CD8-positive, alpha-beta T cell (primary cell): ENCODE measurements at regions of chr5 and their contacts with region 1.

Region 1: GRCh38 chr5:97183100-97183929 is at the start of gene RIOK2:
- DNase-seq: peak; percentile 81 to 96 (median 91)
- ATAC-seq: peak; percentile 90
- H3K4me3 ChIP-seq: peak within 1 kb of the TSS; percentile 50 to 89
- H3K4me3 Mint-ChIP-seq: peak within 1 kb of the TSS; percentile 96
- H3K27ac ChIP-seq: peak within 1 kb of the TSS; percentile 89 to 98
- H3K27ac Mint-ChIP-seq: peak within 1 kb of the TSS; percentile 100
- H3K4me1 ChIP-seq: peaks cover 13% of the 10 kb centered on the region
- H3K4me1 Mint-ChIP-seq: peaks cover 38% of the 10 kb centered on the region
- H3K27me3 ChIP-seq: no peaks in the 10 kb centered on the region
- H3K27me3 Mint-ChIP-seq: no peaks in the 10 kb centered on the region
- CTCF ChIP-seq: no peak
- total RNA-seq, gene RIOK2: 29.2 to 29.6 TPM

Region 2: GRCh38 chr5:95620030-95620869 is 1563.1 kb before region 1 on chr5 and contains the start of gene GPR150:
- CTCF ChIA-PET with region 1: no interaction called
- POLR2A ChIA-PET with region 1: no interaction called
- intact Hi-C with region 1: loop called in 1 of 2 experiments (anchors 10 kb)
- DNase-seq: peak; percentile 32 to 80 (median 61)
- ATAC-seq: peak; percentile 69
- H3K4me3 ChIP-seq: peak within 1 kb of the TSS; percentile 65 to 74
- H3K4me3 Mint-ChIP-seq: peak within 1 kb of the TSS; percentile 89
- H3K27ac ChIP-seq: peak within 1 kb of the TSS in 1 of 2 experiments; percentile 22
- H3K27ac Mint-ChIP-seq: peak within 1 kb of the TSS; percentile 72
- H3K4me1 ChIP-seq: peaks cover 39% of the 10 kb centered on the region
- H3K4me1 Mint-ChIP-seq: peaks cover 46% of the 10 kb centered on the region
- H3K27me3 ChIP-seq: no peaks in the 10 kb centered on the region
- H3K27me3 Mint-ChIP-seq: no peaks in the 10 kb centered on the region
- CTCF ChIP-seq: no peak
- total RNA-seq, gene GPR150: 0.35 TPM in 1 of 2 experiments, not detected in the other

Region 3: GRCh38 chr5:95822542-95823181 is 1360.7 kb before region 1 on chr5 and contains the start of gene GLRX:
- CTCF ChIA-PET with region 1: no interaction called
- POLR2A ChIA-PET with region 1: no interaction called
- intact Hi-C with region 1: loop called in 1 of 2 experiments (anchors 5 kb)
- DNase-seq: peak in 8 of 9 experiments; percentile 42 to 75 (median 60)
- ATAC-seq: peak; percentile 39
- H3K4me3 ChIP-seq: peak within 1 kb of the TSS; percentile 89 to 91
- H3K4me3 Mint-ChIP-seq: peak within 1 kb of the TSS; percentile 98
- H3K27ac ChIP-seq: peak within 1 kb of the TSS; percentile 65 to 84
- H3K27ac Mint-ChIP-seq: peak within 1 kb of the TSS; percentile 96
- H3K4me1 ChIP-seq: peaks cover 52% of the 10 kb centered on the region
- H3K4me1 Mint-ChIP-seq: peaks cover 66% of the 10 kb centered on the region
- H3K27me3 ChIP-seq: no peaks in the 10 kb centered on the region
- H3K27me3 Mint-ChIP-seq: no peaks in the 10 kb centered on the region
- CTCF ChIP-seq: no peak
- total RNA-seq, gene GLRX: 17.9 to 19.5 TPM

Region 4: GRCh38 chr5:96662725-96663513 is 520.4 kb before region 1 on chr5:
- CTCF ChIA-PET with region 1: no interaction called
- POLR2A ChIA-PET with region 1: no interaction called
- intact Hi-C with region 1: loop called (anchors 2 to 5 kb)
- DNase-seq: peak; percentile 71 to 89 (median 83)
- ATAC-seq: peak; percentile 68
- H3K4me3 ChIP-seq: peak overlapping the region; percentile 54 to 86
- H3K4me3 Mint-ChIP-seq: peak overlapping the region; percentile 94
- H3K27ac ChIP-seq: peak overlapping the region; percentile 72 to 81
- H3K27ac Mint-ChIP-seq: peak overlapping the region; percentile 98
- H3K4me1 ChIP-seq: peaks cover 23% of the 10 kb centered on the region
- H3K4me1 Mint-ChIP-seq: peaks cover 51% of the 10 kb centered on the region
- H3K27me3 ChIP-seq: no peaks in the 10 kb centered on the region
- H3K27me3 Mint-ChIP-seq: no peaks in the 10 kb centered on the region
- CTCF ChIP-seq: no peak

Region 5: DNA sequence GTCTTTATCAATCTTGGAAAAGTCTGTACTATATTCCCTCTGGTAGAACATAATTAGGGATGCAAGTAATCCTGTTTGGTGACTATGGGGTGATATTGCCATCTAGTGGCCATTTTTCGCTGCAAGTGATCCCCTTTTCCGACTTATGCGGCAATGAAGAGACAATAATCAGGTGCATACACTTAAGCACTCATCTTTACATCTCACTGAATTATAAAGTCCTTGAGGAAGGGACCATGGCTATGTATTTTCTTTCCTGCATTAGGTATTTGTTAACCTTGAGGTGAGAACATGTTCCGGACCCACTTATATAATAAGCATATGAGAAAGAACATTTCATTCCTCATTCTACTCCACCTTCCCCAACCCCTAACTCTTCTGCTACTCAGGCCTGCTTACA is 21.3 kb before region 1 on chr5:
- CTCF ChIA-PET with region 1: interaction called, 14 read pairs
- POLR2A ChIA-PET with region 1: no interaction called
- intact Hi-C with region 1: loop called in 1 of 2 experiments (anchors 2 kb)
- DNase-seq: peak in 7 of 9 experiments; percentile 21 to 79 (median 54)
- ATAC-seq: peak; percentile 58
- H3K4me3 ChIP-seq: no peak overlapping the region
- H3K4me3 Mint-ChIP-seq: no peak overlapping the region
- H3K27ac ChIP-seq: no peak overlapping the region
- H3K27ac Mint-ChIP-seq: no peak overlapping the region
- H3K4me1 ChIP-seq: no peaks in the 10 kb centered on the region
- H3K4me1 Mint-ChIP-seq: peaks cover 10% of the 10 kb centered on the region
- H3K27me3 ChIP-seq: no peaks in the 10 kb centered on the region
- H3K27me3 Mint-ChIP-seq: no peaks in the 10 kb centered on the region
- CTCF ChIP-seq: peak; percentile 93

Region 6: DNA sequence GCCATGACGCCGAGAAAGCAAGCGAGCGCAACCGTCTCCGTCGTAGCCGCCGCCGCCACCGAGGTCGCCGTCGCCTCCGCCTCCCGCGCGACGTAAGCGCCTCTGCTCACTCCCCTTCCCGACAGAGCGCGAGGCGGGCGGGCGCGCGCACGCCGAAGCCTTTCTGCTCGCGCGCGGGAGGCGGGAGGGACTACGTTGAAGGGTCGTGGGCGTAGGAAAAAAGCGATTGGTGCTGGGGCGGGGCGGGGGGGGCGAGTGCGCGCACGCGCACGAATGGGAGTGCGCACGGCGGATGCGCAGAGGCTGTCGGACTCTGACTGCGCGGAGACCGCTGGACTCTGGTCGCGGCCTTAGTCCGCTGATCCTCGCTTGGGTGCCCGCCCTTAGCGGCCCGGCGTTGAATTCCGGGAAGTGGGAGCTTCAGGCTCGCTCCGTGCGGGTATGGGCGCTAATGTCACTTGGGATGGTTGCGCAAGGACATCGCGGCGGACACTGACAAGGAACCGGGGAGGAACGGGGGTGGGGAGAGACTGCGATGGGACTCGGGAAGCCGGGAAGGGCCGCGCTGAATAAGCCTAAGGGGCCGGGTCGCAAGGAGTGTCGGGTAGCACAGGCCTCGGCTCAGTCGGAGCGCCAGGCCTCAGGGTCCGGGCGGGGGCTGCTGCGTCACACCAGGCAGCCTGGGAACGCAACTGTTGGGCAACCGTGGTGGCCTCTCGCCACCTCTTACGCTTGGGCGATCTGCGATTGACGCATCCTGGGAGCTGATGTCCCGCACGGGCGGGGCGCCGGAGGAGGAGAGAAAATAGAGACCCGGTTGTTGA is 1745.8 kb after region 1 on chr5 and contains the start of gene CHD1:
- CTCF ChIA-PET with region 1: no interaction called
- POLR2A ChIA-PET with region 1: interaction called, 4 read pairs
- intact Hi-C with region 1: loop called (anchors 1 to 10 kb)
- DNase-seq: peak; percentile 91 to 99 (median 94)
- ATAC-seq: peak; percentile 67
- H3K4me3 ChIP-seq: peak within 1 kb of the TSS; percentile 97 to 100
- H3K4me3 Mint-ChIP-seq: peak within 1 kb of the TSS; percentile 96
- H3K27ac ChIP-seq: peak within 1 kb of the TSS; percentile 100
- H3K27ac Mint-ChIP-seq: peak within 1 kb of the TSS; percentile 100
- H3K4me1 ChIP-seq: peaks cover 65% of the 10 kb centered on the region
- H3K4me1 Mint-ChIP-seq: peaks cover 69% of the 10 kb centered on the region
- H3K27me3 ChIP-seq: no peaks in the 10 kb centered on the region
- H3K27me3 Mint-ChIP-seq: no peaks in the 10 kb centered on the region
- CTCF ChIP-seq: no peak
- total RNA-seq, gene CHD1: 319 to 327 TPM

Region 7: GRCh38 chr5:99060306-99061261 is 1877.3 kb after region 1 on chr5:
- CTCF ChIA-PET with region 1: no interaction called
- POLR2A ChIA-PET with region 1: no interaction called
- intact Hi-C with region 1: loop called in 1 of 2 experiments (anchors 10 kb)
- DNase-seq: peak; percentile 79 to 93 (median 86)
- ATAC-seq: peak; percentile 76
- H3K4me3 ChIP-seq: no peak overlapping the region
- H3K4me3 Mint-ChIP-seq: peak overlapping the region; percentile 29
- H3K27ac ChIP-seq: no peak overlapping the region
- H3K27ac Mint-ChIP-seq: no peak overlapping the region
- H3K4me1 ChIP-seq: peaks cover 5% of the 10 kb centered on the region
- H3K4me1 Mint-ChIP-seq: peaks cover 5% of the 10 kb centered on the region
- H3K27me3 ChIP-seq: no peaks in the 10 kb centered on the region
- H3K27me3 Mint-ChIP-seq: peaks cover 8% of the 10 kb centered on the region
- CTCF ChIP-seq: peak; percentile 95